H1 (cell line): ENCODE measurements at regions of chr7 and their contacts with region 1.

Region 1: DNA sequence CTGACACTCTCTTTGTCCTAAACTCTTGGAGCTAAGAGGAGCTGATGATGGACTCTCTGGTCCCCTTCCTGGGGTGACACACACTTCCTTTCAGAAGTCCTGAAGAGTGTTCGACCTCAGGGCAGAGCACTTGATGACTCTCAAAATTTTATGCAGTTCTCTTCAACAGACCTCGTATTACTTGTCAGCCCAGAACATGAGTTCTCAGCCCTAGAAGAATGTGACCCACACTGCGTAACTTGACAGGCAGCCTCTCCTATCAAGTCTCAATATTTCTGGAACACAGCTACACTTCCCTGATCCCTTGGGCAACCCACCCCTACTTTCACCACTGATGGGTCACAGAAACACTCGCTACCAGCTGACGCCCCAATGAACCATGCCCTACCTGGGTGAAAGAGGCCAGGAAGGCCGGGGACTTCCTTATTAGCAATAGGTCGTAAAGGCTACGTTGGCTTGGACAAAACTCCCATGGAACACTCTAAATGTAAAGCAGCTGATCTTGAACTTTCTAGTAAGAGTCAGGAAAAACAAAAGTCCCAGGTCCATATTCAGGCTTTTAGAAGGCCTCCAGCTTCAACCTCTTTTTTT is 202.4 kb upstream of the KCTD7 start:
- DNase-seq: no peak
- H3K4me3 ChIP-seq: no peak overlapping the region
- H3K27ac ChIP-seq: no peak overlapping the region
- H3K4me1 ChIP-seq: no peaks in the 10 kb centered on the region
- H3K27me3 ChIP-seq: no peaks in the 10 kb centered on the region
- CTCF ChIP-seq: no peak
- EP300 ChIP-seq: no peak
- POLR2A ChIP-seq: no peak
- RAD21 ChIP-seq: no peak

Region 2: DNA sequence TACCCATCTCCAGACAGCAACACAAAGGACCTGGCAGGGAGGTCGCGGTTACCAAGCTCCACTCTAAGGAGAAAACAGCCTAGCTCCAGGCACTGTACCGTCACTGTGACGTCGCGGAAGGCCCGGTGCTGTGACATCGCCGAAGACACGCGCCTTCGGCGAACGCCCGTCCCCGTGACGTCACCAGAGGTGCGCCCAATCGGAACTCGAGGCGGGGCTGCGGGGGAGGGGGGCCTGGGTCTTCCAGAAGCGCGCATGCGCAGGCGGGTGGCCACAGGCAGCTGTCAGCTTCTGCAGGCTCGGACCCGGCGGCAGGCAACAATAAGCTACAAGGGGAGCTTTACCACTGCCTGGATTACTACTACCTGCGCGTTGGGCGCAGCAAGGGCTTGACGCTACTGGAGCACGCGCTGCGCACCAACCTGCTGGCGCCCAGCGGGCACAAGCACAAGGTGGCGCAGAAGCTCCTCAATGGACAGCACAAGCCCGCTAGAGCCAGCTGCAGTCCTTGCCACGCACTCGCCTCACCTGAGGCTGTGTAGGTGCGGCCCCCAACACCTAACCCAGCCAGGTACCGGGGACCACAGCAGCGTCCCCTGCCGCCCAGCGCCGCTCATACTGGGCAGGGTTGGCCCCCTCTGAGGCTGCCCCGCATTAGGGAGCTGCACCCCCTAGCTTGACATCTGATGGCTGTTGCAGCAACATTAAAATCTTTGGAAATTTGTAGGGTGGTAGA is 12.7 kb before region 1 on chr7:
- CTCF ChIA-PET with region 1: interaction called, 13 read pairs
- POLR2A ChIA-PET with region 1: no interaction called
- DNase-seq: peak; percentile 79 to 85
- H3K4me3 ChIP-seq: peak overlapping the region; percentile 12 to 56 (median 47); a peak in 7 of 8 replicates
- H3K27ac ChIP-seq: peak overlapping the region; percentile 34; the same call in 1 of the 2 replicates
- H3K4me1 ChIP-seq: peaks cover 0 to 4% (median 1%) of the 10 kb centered on the region in 4 experiments; a peak in 4 of 7 replicates
- H3K27me3 ChIP-seq: peaks cover 0 to 8% (median 5%) of the 10 kb centered on the region in 4 experiments; a peak in 6 of 7 replicates
- CTCF ChIP-seq: peak; percentile 56 to 72 (median 56)
- EP300 ChIP-seq: no peak; a peak in 1 of 3 replicates
- POLR2A ChIP-seq: peak in 1 of 2 experiments; percentile 65; a peak in 1 of 3 replicates
- RAD21 ChIP-seq: peak; percentile 57 to 63